Naive thymus-derived CD4-positive, alpha-beta T cell (primary cell): ENCODE measurements at regions of chr19 and their contacts with region 1.

Region 1: GRCh38 chr19:2151339-2152229 is at the start of gene AP3D1:
- DNase-seq: peak; percentile 98 to 100 (median 100)
- ATAC-seq: peak; percentile 95
- H3K4me3 ChIP-seq: peak within 1 kb of the TSS; percentile 76
- H3K4me3 Mint-ChIP-seq: peak within 1 kb of the TSS; percentile 76 to 93 (median 84)
- H3K27ac ChIP-seq: peak within 1 kb of the TSS; percentile 95
- H3K27ac Mint-ChIP-seq: peak within 1 kb of the TSS; percentile 74 to 95 (median 89)
- H3K4me1 ChIP-seq: peaks cover 19 to 29% of the 10 kb centered on the region in 2 donors
- H3K4me1 Mint-ChIP-seq: peaks cover 16 to 48% (median 41%) of the 10 kb centered on the region in 7 donors
- H3K27me3 ChIP-seq: no peaks in the 10 kb centered on the region
- H3K27me3 Mint-ChIP-seq: peaks cover 0 to 2% (median 0%) of the 10 kb centered on the region in 5 donors
- total RNA-seq, gene AP3D1: 63.7 to 106 (median 80.3) TPM

Region 2: GRCh38 chr19:1652471-1653299 is 498.9 kb before region 1 on chr19 and contains the start of gene TCF3:
- CTCF ChIA-PET with region 1: no interaction called
- POLR2A ChIA-PET with region 1: no interaction called
- intact Hi-C with region 1: loop called in 1 of 2 experiments (anchors 2 kb)
- DNase-seq: peak; percentile 96 to 100 (median 99)
- ATAC-seq: peak; percentile 96
- H3K4me3 ChIP-seq: peak within 1 kb of the TSS; percentile 86
- H3K4me3 Mint-ChIP-seq: peak within 1 kb of the TSS; percentile 86 to 96 (median 91)
- H3K27ac ChIP-seq: peak within 1 kb of the TSS; percentile 99
- H3K27ac Mint-ChIP-seq: peak within 1 kb of the TSS; percentile 87 to 98 (median 95)
- H3K4me1 ChIP-seq: peaks cover 4 to 8% of the 10 kb centered on the region in 2 donors
- H3K4me1 Mint-ChIP-seq: peaks cover 7 to 14% (median 10%) of the 10 kb centered on the region in 7 donors
- H3K27me3 ChIP-seq: no peaks in the 10 kb centered on the region
- H3K27me3 Mint-ChIP-seq: peaks cover 0 to 4% (median 0%) of the 10 kb centered on the region in 5 donors
- total RNA-seq, gene TCF3: 66.6 to 83.6 (median 78.3) TPM

Region 3: DNA sequence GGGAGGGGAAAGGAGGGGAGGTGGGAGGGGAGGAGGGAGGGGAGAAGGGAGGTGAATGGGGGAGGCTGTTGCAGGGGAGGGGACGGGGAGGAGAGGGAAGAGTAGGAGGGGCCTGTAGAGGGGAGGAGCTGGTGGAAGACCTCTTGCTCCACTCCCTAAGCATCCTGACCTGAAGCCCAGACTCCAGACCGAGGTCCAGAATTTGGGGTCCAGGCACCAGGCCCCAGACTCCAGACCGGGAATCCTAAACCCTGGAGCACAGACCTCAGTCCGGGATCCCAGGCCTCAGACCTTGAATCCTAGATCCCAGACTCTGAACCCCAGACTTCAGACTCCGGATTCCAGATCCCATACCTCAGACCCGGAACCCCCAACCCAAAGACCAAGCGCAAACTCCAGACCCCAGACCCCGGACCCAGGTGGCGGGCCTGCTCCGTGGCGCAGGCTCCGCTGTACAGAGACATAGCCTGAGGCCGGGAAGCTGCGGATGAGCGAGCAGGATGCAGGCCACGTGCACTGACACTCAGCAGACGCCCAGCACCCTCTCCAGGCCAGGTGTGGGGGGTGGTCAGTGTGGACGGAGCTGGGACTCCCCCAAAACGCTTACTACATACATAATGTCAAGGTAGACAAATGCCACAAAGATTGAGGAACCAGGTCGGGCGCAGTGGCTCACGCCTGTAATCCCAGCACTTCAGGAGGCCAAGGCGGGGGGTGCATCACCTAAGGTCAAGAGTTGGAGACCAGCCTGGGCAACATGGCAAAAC is 135.4 kb before region 1 on chr19:
- CTCF ChIA-PET with region 1: interaction called, 3 read pairs
- POLR2A ChIA-PET with region 1: no interaction called
- intact Hi-C with region 1: loop called (anchors 1 to 2 kb)
- DNase-seq: peak in 7 of 9 donors; percentile 26 to 78 (median 56)
- ATAC-seq: peak; percentile 65
- H3K4me3 ChIP-seq: no peak overlapping the region
- H3K4me3 Mint-ChIP-seq: peak overlapping the region in 9 of 10 donors; percentile 48 to 79 (median 59)
- H3K27ac ChIP-seq: peak overlapping the region; percentile 37
- H3K27ac Mint-ChIP-seq: peak overlapping the region in 8 of 9 donors; percentile 29 to 81 (median 60)
- H3K4me1 ChIP-seq: no peaks in the 10 kb centered on the region
- H3K4me1 Mint-ChIP-seq: peaks cover 4 to 28% (median 16%) of the 10 kb centered on the region in 7 donors
- H3K27me3 ChIP-seq: no peaks in the 10 kb centered on the region
- H3K27me3 Mint-ChIP-seq: no peaks in the 10 kb centered on the region

Region 4: DNA sequence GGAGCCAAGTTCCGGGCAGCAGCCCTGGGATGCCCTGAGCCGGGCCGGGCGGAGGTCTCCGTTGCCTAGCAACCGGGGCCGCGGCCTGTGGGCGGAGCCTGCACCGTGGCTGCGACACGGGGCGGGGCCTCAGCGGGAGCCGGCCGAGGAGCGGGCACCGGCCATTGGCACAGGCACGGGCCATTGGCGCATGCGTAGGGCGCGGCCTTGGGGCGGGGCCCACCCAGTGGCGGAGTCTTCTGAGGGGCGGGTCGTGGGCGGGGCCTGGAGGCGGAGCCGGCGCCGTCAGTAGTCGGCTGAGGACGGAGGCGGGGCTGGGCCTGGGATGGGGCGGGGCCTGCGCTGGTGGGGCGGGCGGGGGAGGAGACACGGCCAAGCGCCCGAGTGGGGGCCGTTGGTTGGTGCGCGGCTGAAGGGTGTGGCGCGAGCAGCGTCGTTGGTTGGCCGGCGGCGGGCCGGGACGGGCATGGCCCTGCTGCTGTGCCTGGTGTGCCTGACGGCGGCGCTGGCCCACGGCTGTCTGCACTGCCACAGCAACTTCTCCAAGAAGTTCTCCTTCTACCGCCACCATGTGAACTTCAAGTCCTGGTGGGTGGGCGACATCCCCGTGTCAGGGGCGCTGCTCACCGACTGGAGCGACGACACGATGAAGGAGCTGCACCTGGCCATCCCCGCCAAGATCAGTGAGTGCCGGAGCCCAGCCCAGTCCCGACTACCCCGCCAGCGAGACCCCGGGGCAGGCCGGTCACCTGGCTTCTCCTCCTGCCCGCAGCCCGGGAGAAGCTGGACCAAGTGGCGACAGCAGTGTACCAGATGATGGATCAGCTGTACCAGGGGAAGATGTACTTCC is 54.9 kb before region 1 on chr19 and contains the start of gene IZUMO4:
- CTCF ChIA-PET with region 1: no interaction called
- POLR2A ChIA-PET with region 1: interaction called, 3 read pairs
- intact Hi-C with region 1: loop called (anchors 1 kb)
- DNase-seq: peak; percentile 98 to 100 (median 99)
- ATAC-seq: peak; percentile 90
- H3K4me3 ChIP-seq: peak within 1 kb of the TSS; percentile 82
- H3K4me3 Mint-ChIP-seq: peak within 1 kb of the TSS; percentile 95 to 98 (median 97)
- H3K27ac ChIP-seq: peak within 1 kb of the TSS; percentile 88
- H3K27ac Mint-ChIP-seq: peak within 1 kb of the TSS; percentile 90 to 98 (median 94)
- H3K4me1 ChIP-seq: peaks cover 13% of the 10 kb centered on the region in 2 donors
- H3K4me1 Mint-ChIP-seq: peaks cover 15 to 37% (median 27%) of the 10 kb centered on the region in 7 donors
- H3K27me3 ChIP-seq: no peaks in the 10 kb centered on the region
- H3K27me3 Mint-ChIP-seq: no peaks in the 10 kb centered on the region
- total RNA-seq, gene IZUMO4: 12.2 to 26.8 (median 15.7) TPM

Region 5: DNA sequence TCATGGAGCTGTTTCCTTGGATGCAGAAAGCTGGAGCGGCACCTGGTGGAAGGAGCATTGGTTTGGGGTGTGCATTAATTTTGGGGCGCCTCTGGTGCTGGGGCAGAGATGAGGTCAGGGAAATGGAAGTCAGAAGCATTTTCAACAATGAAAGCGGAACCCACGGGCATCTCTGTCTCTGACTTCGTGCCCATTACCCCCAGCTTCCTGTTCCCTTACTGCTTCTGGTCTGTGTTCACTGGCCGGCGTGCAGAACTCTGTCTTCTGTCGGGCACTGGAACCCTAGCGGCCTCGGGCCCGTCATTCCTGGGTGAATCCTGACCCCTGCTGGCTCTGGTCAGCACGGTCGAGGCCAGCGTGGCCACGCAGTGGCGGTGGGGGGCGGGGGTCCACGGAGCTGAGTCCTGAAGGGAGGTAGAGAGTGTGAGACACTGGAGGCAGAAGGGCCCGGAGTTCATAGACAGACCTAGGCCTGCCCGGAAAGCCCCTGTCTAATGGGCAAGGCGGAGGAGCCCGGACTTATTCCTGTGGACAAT is 164.3 kb after region 1 on chr19:
- CTCF ChIA-PET with region 1: no interaction called
- POLR2A ChIA-PET with region 1: no interaction called
- intact Hi-C with region 1: loop called in 1 of 2 experiments (anchors 5 kb)
- DNase-seq: peak in 1 of 9 donors; percentile 29
- ATAC-seq: peak; percentile 88
- H3K4me3 ChIP-seq: no peak overlapping the region
- H3K4me3 Mint-ChIP-seq: no peak overlapping the region
- H3K27ac ChIP-seq: no peak overlapping the region
- H3K27ac Mint-ChIP-seq: no peak overlapping the region
- H3K4me1 ChIP-seq: no peaks in the 10 kb centered on the region
- H3K4me1 Mint-ChIP-seq: peaks cover 0 to 6% (median 0%) of the 10 kb centered on the region in 7 donors
- H3K27me3 ChIP-seq: peaks cover 0 to 5% of the 10 kb centered on the region in 2 donors
- H3K27me3 Mint-ChIP-seq: peaks cover 17 to 26% (median 25%) of the 10 kb centered on the region in 5 donors

Region 6: DNA sequence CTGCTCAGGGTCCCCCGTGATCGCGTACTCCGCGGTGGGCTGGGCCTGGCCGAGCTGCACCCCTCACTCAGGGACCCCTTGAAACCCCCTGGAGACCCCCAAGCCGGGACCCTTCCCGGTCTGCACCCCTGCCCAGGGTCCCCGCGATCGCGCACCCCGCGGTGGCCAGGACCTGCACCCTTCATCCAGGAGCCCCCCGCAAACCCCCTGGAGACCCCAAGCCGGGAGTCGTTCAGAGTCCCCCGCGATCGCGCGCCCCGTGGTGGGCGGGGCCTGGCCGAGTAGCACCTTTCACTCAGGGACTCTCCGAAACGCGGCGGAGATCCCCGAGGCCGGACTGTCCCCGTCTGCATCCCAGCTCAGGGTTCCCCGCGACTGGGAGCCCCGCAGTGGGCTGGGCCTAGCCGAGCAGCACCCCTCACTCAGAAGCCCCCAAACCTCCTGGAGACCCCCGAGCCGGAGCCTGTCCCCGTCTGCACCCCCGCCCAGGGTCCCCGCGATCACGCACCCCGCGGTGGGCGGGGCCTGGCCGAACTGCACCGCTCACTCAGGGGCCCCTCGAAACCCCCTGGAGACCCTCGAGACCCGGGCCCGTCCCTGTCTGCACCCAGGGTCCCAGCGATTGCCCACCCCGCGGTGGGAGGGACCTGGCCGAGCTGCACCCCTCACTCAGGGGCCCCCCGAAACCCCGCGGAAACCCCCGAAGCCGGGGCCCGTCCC is 304.4 kb after region 1 on chr19:
- CTCF ChIA-PET with region 1: no interaction called
- POLR2A ChIA-PET with region 1: no interaction called
- intact Hi-C with region 1: loop called in 1 of 2 experiments (anchors 10 kb)
- DNase-seq: peak in 5 of 9 donors; percentile 14 to 68 (median 29)
- ATAC-seq: peak; percentile 59
- H3K4me3 ChIP-seq: peak overlapping the region; percentile 79
- H3K4me3 Mint-ChIP-seq: peak overlapping the region; percentile 77 to 90 (median 84)
- H3K27ac ChIP-seq: peak overlapping the region; percentile 86
- H3K27ac Mint-ChIP-seq: peak overlapping the region in 6 of 9 donors; percentile 77 to 88 (median 82)
- H3K4me1 ChIP-seq: peaks cover 14 to 18% of the 10 kb centered on the region in 2 donors
- H3K4me1 Mint-ChIP-seq: peaks cover 14 to 28% (median 18%) of the 10 kb centered on the region in 7 donors
- H3K27me3 ChIP-seq: no peaks in the 10 kb centered on the region
- H3K27me3 Mint-ChIP-seq: no peaks in the 10 kb centered on the region